T-cell (primary cell): ENCODE measurements at regions of chr2 and their contacts with region 1.

Region 1: DNA sequence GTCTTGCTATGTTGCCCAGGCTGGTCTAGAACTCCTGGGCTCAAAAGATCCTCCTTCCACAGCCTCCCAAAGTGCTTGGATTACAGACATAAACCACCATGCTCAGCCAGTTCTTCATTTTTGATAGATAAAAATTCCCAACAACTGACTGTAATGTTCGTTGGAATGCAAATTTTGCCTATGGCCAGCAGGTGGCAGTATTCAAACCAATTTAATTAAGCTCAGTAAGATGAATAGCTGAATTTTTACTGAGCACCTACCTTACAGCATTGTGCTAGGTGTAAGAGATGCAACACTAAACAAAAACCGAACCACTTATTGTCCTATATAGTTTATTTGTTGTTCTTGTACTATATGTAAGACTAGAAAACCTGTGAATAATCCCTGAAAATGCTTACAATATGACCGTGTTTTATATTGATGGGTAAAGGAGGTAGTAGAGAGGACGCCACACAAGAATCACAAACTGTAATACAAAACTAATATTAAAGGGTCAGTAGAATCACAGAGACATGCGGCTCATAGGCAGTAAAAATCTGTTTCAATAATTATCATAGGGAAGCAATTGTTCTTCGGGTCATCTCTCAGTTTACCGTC is 8.2 kb upstream of the TMEM182 start:
- DNase-seq: peak in 13 of 35 experiments; percentile 1 to 60 (median 10)
- ATAC-seq: peak in 1 of 4 experiments; percentile 29
- H3K4me3 ChIP-seq: no peak overlapping the region
- H3K4me3 Mint-ChIP-seq: no peak overlapping the region
- H3K27ac ChIP-seq: no peak overlapping the region
- H3K27ac Mint-ChIP-seq: no peak overlapping the region
- H3K4me1 ChIP-seq: no peaks in the 10 kb centered on the region
- H3K4me1 Mint-ChIP-seq: no peaks in the 10 kb centered on the region
- H3K27me3 ChIP-seq: no peaks in the 10 kb centered on the region
- H3K27me3 Mint-ChIP-seq: no peaks in the 10 kb centered on the region

Region 2: DNA sequence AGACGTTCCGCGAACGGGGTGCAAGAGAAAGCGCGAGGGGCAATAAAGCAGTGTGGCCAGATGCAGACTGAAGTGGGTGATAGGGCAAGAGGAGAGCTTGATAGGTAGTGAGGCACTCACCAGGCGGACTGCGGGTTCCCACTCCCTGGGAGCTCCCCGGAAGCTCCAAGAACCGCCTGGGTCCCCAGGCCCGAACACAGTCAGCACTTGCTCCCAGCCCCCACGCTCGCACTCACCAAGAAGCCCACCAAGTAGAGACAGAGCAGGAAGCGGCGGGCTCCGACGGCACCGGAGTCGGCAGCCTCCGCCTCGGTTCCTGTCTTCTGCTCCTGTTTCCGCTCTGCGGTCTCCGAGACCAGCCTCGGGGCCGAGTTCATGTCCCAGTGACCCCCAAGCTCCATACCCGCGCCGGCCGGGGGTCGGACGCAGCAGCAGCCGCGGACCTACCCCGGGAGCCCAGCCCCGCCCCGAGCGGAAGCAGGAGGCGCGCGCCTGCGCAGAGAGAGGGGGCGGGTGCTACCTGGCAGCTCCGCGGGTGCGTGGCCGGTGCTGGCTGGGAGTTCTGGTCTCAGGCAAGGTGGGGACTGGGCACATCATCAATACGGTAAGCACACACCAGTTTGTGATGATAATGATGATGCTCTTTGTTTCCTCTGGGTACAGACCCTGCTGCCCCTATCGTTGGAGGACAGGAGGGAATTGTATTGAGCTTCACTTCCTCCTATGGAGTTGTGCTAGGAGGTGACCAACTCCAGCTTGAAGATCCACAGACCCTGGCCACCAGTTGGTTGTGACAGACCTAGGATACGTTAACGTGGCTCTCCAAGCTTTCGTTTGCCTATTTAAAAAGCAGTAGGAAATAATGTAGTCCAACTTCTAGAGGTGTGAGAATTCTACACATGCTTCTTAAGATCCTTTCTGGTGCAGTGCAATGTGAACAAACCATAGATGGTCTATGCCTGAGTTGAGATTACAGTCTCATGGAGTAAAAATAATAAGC is 17.0 kb before region 1 on chr2:
- CTCF ChIA-PET with region 1: interaction called, 5 to 50 read pairs
- POLR2A ChIA-PET with region 1: interaction called, 3 read pairs
- DNase-seq: peak; percentile 55 to 87 (median 77)
- ATAC-seq: peak; percentile 92 to 93 (median 92)
- H3K4me3 ChIP-seq: peak overlapping the region; percentile 73 to 74
- H3K4me3 Mint-ChIP-seq: peak overlapping the region; percentile 93 to 97 (median 95)
- H3K27ac ChIP-seq: peak overlapping the region; percentile 48
- H3K27ac Mint-ChIP-seq: peak overlapping the region; percentile 86 to 93
- H3K4me1 ChIP-seq: peaks cover 14 to 20% of the 10 kb centered on the region in 2 experiments
- H3K4me1 Mint-ChIP-seq: peaks cover 43 to 50% (median 44%) of the 10 kb centered on the region in 3 donors
- H3K27me3 ChIP-seq: no peaks in the 10 kb centered on the region
- H3K27me3 Mint-ChIP-seq: no peaks in the 10 kb centered on the region

Region 3: GRCh38 chr2:102806250-102806837 is 52.7 kb after region 1 on chr2:
- CTCF ChIA-PET with region 1: interaction called, 3 to 13 read pairs
- POLR2A ChIA-PET with region 1: no interaction called
- DNase-seq: peak in 15 of 35 experiments; percentile 1 to 45 (median 8)
- ATAC-seq: no peak
- H3K4me3 ChIP-seq: no peak overlapping the region
- H3K4me3 Mint-ChIP-seq: no peak overlapping the region
- H3K27ac ChIP-seq: no peak overlapping the region
- H3K27ac Mint-ChIP-seq: no peak overlapping the region
- H3K4me1 ChIP-seq: peaks cover 4 to 15% of the 10 kb centered on the region in 2 experiments
- H3K4me1 Mint-ChIP-seq: peaks cover 10 to 23% (median 15%) of the 10 kb centered on the region in 3 donors
- H3K27me3 ChIP-seq: no peaks in the 10 kb centered on the region
- H3K27me3 Mint-ChIP-seq: no peaks in the 10 kb centered on the region